ENCODE measurements at regions of chr16 and their contacts with region 1.

Region 1: GRCh38 chr16:17083628-17084027 is 387.1 kb downstream of the XYLT1 start:
- DNase-seq: peak in 1 of 2 experiments; percentile 71
- H3K4me3 ChIP-seq: peak overlapping the region in 1 of 4 experiments; percentile 45; a peak in 2 of 8 replicates
- H3K27ac ChIP-seq: peak overlapping the region; percentile 88
- H3K4me1 ChIP-seq: peaks cover 11 to 30% (median 21%) of the 10 kb centered on the region in 4 experiments
- H3K27me3 ChIP-seq: no peaks in the 10 kb centered on the region; a peak in 1 of 7 replicates
- CTCF ChIP-seq: no peak
- EP300 ChIP-seq: peak in 1 of 2 experiments; percentile 92; a peak in 2 of 3 replicates
- POLR2A ChIP-seq: peak in 1 of 2 experiments; percentile 64; a peak in 2 of 3 replicates
- RAD21 ChIP-seq: no peak; a peak in 1 of 4 replicates

Region 2: GRCh38 chr16:17070882-17071592 is 12.6 kb before region 1 on chr16:
- CTCF ChIA-PET with region 1: no interaction called
- POLR2A ChIA-PET with region 1: interaction called, 10 read pairs
- DNase-seq: peak in 1 of 2 experiments; percentile 61
- H3K4me3 ChIP-seq: peak overlapping the region; percentile 12 to 49 (median 20); a peak in 5 of 8 replicates
- H3K27ac ChIP-seq: no peak overlapping the region
- H3K4me1 ChIP-seq: peaks cover 0 to 2% (median 1%) of the 10 kb centered on the region in 4 experiments; a peak in 4 of 7 replicates
- H3K27me3 ChIP-seq: no peaks in the 10 kb centered on the region
- CTCF ChIP-seq: no peak
- EP300 ChIP-seq: no peak
- POLR2A ChIP-seq: no peak
- RAD21 ChIP-seq: peak; percentile 9 to 40; a peak in 3 of 4 replicates

Region 3: DNA sequence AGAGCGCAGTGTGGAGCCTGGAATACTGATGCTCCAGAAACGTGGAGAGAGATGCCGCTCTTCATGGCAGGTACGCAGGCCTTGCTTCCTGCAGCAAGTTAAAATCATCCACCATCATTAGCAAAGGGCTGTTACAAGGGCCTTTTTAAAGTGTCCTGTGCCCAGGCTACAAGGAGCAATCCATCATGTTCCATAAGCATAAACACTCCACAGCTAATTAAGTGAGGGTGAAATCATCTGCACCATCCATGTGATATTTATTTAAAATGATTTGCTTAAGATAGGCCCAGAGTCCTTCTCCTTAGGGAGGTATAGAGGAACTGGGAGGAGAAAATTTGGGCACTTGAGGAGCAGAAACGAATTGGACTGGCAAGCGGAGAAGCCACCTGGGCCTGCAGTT is 15.1 kb after region 1 on chr16:
- CTCF ChIA-PET with region 1: interaction called, 6 read pairs
- POLR2A ChIA-PET with region 1: interaction called, 11 read pairs
- DNase-seq: no peak
- H3K4me3 ChIP-seq: no peak overlapping the region
- H3K27ac ChIP-seq: no peak overlapping the region
- H3K4me1 ChIP-seq: no peaks in the 10 kb centered on the region
- H3K27me3 ChIP-seq: peaks cover 0 to 3% (median 1%) of the 10 kb centered on the region in 4 experiments; a peak in 2 of 7 replicates
- CTCF ChIP-seq: no peak
- EP300 ChIP-seq: no peak
- POLR2A ChIP-seq: no peak
- RAD21 ChIP-seq: no peak

Region 4: DNA sequence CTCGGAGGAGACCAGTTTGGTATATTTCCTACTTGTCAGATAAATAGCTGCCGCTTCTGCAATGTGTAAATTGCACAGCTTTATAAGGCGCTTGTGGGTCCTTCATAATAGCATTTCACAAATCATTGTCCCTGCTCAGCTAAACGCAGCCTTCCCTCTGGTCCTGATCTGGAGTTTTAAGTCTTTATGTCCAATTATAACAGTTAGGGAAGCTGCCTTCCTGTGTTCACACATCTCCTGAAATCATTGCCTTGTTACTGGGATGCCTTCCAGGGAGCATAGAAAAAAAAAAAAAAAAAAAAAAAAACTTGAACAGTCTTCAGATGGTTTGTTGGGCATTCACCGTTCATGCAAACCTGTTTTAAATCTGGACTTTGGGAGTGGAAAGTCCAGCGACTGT is 45.2 kb after region 1 on chr16:
- CTCF ChIA-PET with region 1: no interaction called
- POLR2A ChIA-PET with region 1: no interaction called
- DNase-seq: no peak
- H3K4me3 ChIP-seq: no peak overlapping the region
- H3K27ac ChIP-seq: no peak overlapping the region
- H3K4me1 ChIP-seq: peaks cover 0 to 4% (median 2%) of the 10 kb centered on the region in 4 experiments; a peak in 3 of 7 replicates
- H3K27me3 ChIP-seq: no peaks in the 10 kb centered on the region
- CTCF ChIP-seq: no peak
- EP300 ChIP-seq: no peak
- POLR2A ChIP-seq: no peak
- RAD21 ChIP-seq: no peak